Right ventricle myocardium inferior (tissue), 1 donor: ENCODE measurements at regions of chr2 and their contacts with region 1.

Region 1: GRCh38 chr2:1140389-1141003 is 189.8 kb downstream of the SNTG2 start:
- DNase-seq: no peak
- ATAC-seq: peak; percentile 44

Region 2: GRCh38 chr2:714005-714741 is 426.3 kb before region 1 on chr2:
- intact Hi-C with region 1: loop called (anchors 10 kb)
- DNase-seq: no peak
- ATAC-seq: no peak